ENCODE measurements at regions of chr12 and their contacts with region 1.

Region 1: DNA sequence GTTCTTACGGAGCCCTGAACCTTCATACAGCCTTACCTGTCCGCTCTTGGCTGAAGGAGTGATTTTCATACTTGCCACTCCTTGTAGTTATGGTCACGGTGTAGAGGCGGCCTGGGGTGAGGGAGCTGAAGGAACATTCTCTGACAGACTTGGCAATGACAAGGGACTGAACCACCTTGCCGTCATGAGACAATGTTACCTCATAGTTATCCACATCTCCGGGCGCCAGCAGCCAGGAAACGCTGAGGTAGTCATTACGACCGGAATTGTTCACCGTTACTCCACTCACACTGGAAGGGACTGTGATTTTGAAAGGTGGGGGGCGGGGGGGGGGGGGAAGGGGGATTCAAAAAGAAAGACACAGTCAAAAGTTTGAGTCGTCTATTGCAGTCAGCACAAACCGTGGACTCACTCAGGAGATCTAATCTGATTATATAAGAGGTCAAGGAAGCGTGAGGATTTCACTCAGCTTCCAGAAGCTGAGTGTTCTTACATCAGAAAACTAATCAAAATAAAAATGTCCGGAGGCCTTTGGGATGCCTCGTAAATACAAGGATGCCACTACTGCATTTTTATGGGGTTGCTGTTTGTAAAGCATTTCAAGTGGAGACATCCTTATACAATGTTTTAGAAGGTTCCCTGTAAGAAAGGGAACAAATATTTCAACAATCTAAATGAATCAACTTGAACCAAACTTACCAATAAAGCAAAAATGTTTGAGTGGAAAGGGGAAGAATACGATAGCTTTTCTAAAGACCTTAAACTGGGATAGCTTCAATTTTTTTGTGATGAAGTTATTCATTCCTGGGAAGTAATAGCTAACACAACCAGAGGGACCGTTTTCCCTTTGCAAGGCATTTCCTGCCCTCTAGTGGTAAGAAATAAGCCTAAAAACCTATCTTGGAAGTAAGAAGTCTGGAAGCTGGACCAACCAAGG is 60.6 kb downstream of the PTPRB start:
- DNase-seq: no peak
- ATAC-seq: peak; percentile 74
- H3K4me3 Mint-ChIP-seq: no peak overlapping the region
- H3K27ac Mint-ChIP-seq: no peak overlapping the region
- H3K4me1 Mint-ChIP-seq: peaks cover 6% of the 10 kb centered on the region; the same call in 1 of the 2 replicates
- H3K27me3 Mint-ChIP-seq: no peaks in the 10 kb centered on the region
- CTCF ChIP-seq: peak; percentile 61

Region 2: GRCh38 chr12:69879041-69879960 is 697.3 kb before region 1 on chr12:
- CTCF ChIA-PET with region 1: interaction called, 26 read pairs
- POLR2A ChIA-PET with region 1: no interaction called
- DNase-seq: peak; percentile 77
- ATAC-seq: peak; percentile 83
- H3K4me3 Mint-ChIP-seq: no peak overlapping the region
- H3K27ac Mint-ChIP-seq: no peak overlapping the region
- H3K4me1 Mint-ChIP-seq: peaks cover 24% of the 10 kb centered on the region
- H3K27me3 Mint-ChIP-seq: no peaks in the 10 kb centered on the region
- CTCF ChIP-seq: peak; percentile 80; the same call in 1 of the 2 replicates

Region 3: GRCh38 chr12:70507442-70507841 is 69.2 kb before region 1 on chr12:
- CTCF ChIA-PET with region 1: interaction called, 11 read pairs
- POLR2A ChIA-PET with region 1: no interaction called
- DNase-seq: no peak
- ATAC-seq: peak; percentile 92
- H3K4me3 Mint-ChIP-seq: no peak overlapping the region; the same call in 1 of the 2 replicates
- H3K27ac Mint-ChIP-seq: no peak overlapping the region
- H3K4me1 Mint-ChIP-seq: peaks cover 22% of the 10 kb centered on the region
- H3K27me3 Mint-ChIP-seq: peaks cover 13% of the 10 kb centered on the region; the same call in 1 of the 2 replicates
- CTCF ChIP-seq: no peak

Region 4: DNA sequence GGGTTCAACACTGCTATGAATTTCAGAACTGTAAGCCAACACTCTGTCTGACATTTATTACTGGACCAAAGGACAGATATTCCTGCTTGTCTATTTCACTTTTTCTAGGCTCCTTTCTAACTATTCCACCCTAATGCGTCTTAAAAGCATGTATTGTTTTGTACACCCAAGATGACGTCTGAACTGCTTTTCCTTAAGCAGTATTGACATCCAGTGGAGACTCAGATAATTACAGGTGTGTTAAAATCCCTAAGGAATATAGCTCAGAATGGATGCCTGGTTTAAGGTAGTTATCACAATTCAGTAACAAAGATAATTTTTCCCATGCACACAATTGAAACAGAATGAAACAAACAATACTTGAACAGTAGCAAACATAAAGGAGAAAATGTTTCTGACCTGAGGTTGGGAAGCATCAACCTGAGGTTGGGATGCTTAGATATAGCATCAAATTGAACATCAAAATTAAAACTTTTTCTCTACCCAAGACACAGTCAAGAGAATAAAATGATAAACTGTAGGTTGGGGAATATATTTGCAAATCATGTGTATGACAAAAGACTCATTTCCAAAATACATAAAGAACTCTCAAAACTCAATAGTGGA is 437.7 kb after region 1 on chr12:
- CTCF ChIA-PET with region 1: no interaction called
- POLR2A ChIA-PET with region 1: no interaction called
- DNase-seq: no peak
- ATAC-seq: peak; percentile 79
- H3K4me3 Mint-ChIP-seq: no peak overlapping the region
- H3K27ac Mint-ChIP-seq: no peak overlapping the region
- H3K4me1 Mint-ChIP-seq: no peaks in the 10 kb centered on the region
- H3K27me3 Mint-ChIP-seq: no peaks in the 10 kb centered on the region
- CTCF ChIP-seq: no peak